ENCODE measurements at regions of chr11 and their contacts with region 1.

Region 1: DNA sequence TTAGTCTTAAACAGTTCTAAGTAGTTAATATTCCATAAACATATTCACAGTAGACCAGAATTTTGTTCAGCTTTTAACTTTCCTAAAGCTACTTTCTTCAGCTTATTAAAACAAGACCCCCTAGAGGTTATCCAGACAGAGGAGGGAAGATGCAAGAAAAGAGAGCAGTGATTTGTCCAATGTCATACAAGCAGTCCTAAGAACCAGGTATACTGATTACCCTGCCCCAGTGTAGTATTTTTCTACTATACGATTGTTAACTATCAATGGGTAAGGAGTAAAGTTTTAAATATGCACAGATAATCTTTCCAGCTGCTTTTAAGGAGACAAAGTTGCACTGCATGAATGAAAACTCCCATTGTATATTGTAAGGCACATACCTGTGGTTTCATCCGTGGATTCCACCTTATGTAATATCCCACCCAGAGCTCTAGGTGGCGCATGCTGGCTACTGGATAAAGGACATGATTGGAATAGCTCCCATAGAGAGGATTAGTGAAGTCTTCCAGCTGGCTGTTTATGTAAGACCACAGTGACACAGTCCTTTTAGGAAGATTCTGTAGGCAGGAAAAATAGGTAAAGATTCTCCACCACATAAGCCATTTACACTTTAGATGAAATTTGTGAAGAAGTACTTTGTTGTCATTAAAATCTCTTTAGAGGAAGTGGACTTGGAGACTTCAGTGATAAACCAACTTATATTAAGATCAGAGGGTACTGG is 45.6 kb downstream of the CEP57 start:
- DNase-seq: peak; percentile 20
- CTCF ChIP-seq: peak; percentile 89

Region 2: GRCh38 chr11:95821640-95822039 is 14.3 kb before region 1 on chr11:
- CTCF ChIA-PET with region 1: interaction called, 16 read pairs
- POLR2A ChIA-PET with region 1: no interaction called
- DNase-seq: no peak
- CTCF ChIP-seq: no peak

Region 3: GRCh38 chr11:95849087-95849825 is 13.3 kb after region 1 on chr11:
- CTCF ChIA-PET with region 1: interaction called, 30 read pairs
- POLR2A ChIA-PET with region 1: no interaction called
- DNase-seq: peak; percentile 10
- CTCF ChIP-seq: peak; percentile 48

Region 4: DNA sequence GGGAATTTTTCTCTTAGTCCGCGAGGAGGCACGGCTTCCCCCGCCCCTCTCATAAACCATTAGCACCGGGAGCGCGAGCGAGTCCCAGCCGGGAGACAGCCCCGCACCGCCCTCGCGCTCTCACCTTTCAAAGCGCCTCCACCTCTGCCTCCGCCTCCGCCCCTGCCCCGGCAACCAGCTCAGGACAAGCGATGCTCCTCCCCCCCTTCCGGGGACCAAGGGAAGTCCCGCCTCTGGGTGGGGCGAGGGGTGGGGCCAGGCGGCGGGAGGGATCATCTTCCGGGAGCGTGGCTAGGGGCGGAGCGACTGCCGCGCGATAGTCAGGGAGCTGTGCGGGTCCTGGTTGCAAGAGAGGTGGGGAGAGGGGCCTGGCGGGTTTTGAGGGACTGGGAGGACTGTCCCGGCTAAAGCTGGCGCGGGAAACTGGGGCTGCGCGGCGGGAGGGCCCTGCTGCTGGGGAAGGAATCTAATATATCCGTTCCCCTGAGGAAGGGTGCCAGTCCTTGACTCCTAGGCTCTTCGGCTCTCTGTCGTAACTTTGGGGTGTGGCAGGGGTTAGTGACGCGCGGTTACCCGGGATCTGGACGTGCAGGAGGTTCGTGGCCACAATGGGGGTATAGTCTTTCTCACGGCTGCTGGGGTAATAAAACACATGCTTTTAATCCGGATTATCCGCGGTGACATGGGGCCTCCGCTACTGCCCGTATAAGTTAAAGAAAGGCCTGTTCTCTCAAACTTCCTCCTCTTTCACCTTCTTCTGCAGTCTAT is 554.0 kb after region 1 on chr11 and contains the starts of genes CCDC82 and JRKL:
- CTCF ChIA-PET with region 1: interaction called, 45 read pairs
- POLR2A ChIA-PET with region 1: no interaction called
- DNase-seq: peak; percentile 98
- CTCF ChIP-seq: no peak

Region 5: DNA sequence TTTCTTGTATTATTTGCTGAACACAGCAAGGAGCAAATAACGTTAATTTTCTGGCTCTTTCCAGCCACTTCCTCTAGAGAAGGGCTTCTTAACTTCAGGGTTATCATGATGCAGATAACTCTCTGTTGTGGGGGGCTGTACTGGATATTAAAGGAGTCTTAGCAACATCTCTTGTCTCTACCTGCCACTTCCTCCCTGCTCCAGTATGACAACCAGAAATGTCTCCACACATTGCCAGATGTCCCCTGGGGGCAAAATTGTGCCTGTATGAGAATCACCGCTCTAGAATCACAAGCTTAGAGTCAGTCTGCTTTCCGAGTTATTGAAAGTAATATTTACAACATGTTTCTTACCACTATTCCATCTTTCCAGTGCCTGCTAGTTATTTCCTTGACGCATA is 560.7 kb after region 1 on chr11:
- CTCF ChIA-PET with region 1: interaction called, 45 read pairs
- POLR2A ChIA-PET with region 1: no interaction called
- DNase-seq: no peak
- CTCF ChIP-seq: no peak